Activated B cell treated with CpG ODN at 0.5 μM for 24 hours (primary cell): ENCODE measurements at regions of chr15 and their contacts with region 1.

Region 1: GRCh38 chr15:90451053-90451850 is 63.2 kb downstream of the IQGAP1 start:
- DNase-seq: no peak
- ATAC-seq: no peak
- H3K4me3 Mint-ChIP-seq: no peak overlapping the region
- H3K27ac Mint-ChIP-seq: no peak overlapping the region
- H3K4me1 Mint-ChIP-seq: no peaks in the 10 kb centered on the region
- H3K27me3 Mint-ChIP-seq: no peaks in the 10 kb centered on the region
- CTCF ChIP-seq: no peak

Region 2: GRCh38 chr15:90482124-90483011 is 31.1 kb after region 1 on chr15:
- CTCF ChIA-PET with region 1: no interaction called
- POLR2A ChIA-PET with region 1: no interaction called
- intact Hi-C with region 1: no loop called
- DNase-seq: no peak
- ATAC-seq: no peak
- H3K4me3 Mint-ChIP-seq: no peak overlapping the region
- H3K27ac Mint-ChIP-seq: no peak overlapping the region
- H3K4me1 Mint-ChIP-seq: peaks cover 48% of the 10 kb centered on the region
- H3K27me3 Mint-ChIP-seq: no peaks in the 10 kb centered on the region
- CTCF ChIP-seq: no peak

Region 3: GRCh38 chr15:90497912-90498311 is 46.7 kb after region 1 on chr15:
- CTCF ChIA-PET with region 1: no interaction called
- POLR2A ChIA-PET with region 1: no interaction called
- intact Hi-C with region 1: loop called (anchors 10 kb)
- DNase-seq: no peak
- ATAC-seq: no peak
- H3K4me3 Mint-ChIP-seq: no peak overlapping the region
- H3K27ac Mint-ChIP-seq: no peak overlapping the region
- H3K4me1 Mint-ChIP-seq: no peaks in the 10 kb centered on the region
- H3K27me3 Mint-ChIP-seq: no peaks in the 10 kb centered on the region
- CTCF ChIP-seq: no peak